ENCODE measurements at regions of chr7 and their contacts with region 1.

Region 1: GRCh38 chr7:876167-876967 is at the start of gene GET4:
- DNase-seq: peak; percentile 95 to 97
- ATAC-seq: peak; percentile 80 to 89 (median 84)
- H3K4me3 ChIP-seq: peak within 1 kb of the TSS; percentile 78 to 97 (median 84)
- H3K27ac ChIP-seq: peak within 1 kb of the TSS; percentile 55 to 94 (median 90)
- H3K4me1 ChIP-seq: peaks cover 10 to 74% (median 53%) of the 10 kb centered on the region in 9 donors
- H3K27me3 ChIP-seq: no peaks in the 10 kb centered on the region
- CTCF ChIP-seq: peak in 4 of 9 donors; percentile 23 to 61 (median 50)
- total RNA-seq, gene GET4: 14.7 to 25.0 (median 20.4) TPM

Region 2: DNA sequence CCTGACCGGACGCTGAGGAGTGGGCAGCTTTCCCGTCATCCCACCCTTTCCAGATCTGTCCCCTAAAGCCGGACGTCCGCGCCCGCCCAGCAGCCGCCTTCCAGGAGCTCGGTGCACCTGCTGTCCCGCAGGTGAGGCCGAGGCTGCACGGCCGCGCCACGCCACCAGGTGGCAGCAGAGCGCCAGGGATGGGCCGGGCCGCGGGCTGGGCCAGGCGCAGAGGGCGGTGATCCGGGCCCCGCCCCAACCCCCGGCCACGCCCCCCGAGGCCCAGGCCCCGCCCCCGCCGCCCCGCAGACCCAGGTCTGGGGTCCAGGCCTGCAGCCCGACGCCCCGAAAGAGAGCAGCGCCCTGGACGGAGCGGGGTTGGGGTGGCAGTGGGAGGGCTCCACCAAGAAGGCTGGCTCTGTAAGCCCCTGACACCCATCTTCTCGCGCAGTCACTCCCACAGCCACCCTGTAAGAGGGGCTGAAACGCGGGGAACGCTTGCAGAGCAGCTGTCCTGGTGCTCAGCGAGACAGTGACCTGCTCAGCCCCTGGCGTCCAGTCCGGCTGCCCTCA is 554.2 kb before region 1 on chr7:
- intact Hi-C with region 1: loop called in 4 of 10 experiments (anchors 5 to 10 kb)
- DNase-seq: peak; percentile 48 to 79
- ATAC-seq: peak; percentile 65 to 90 (median 80)
- H3K4me3 ChIP-seq: peak overlapping the region in 1 of 10 donors; percentile 20
- H3K27ac ChIP-seq: no peak overlapping the region
- H3K4me1 ChIP-seq: peaks cover 0 to 33% (median 5%) of the 10 kb centered on the region in 9 donors
- H3K27me3 ChIP-seq: peaks cover 0 to 25% (median 15%) of the 10 kb centered on the region in 7 donors
- CTCF ChIP-seq: peak; percentile 84 to 98 (median 95)

Region 3: DNA sequence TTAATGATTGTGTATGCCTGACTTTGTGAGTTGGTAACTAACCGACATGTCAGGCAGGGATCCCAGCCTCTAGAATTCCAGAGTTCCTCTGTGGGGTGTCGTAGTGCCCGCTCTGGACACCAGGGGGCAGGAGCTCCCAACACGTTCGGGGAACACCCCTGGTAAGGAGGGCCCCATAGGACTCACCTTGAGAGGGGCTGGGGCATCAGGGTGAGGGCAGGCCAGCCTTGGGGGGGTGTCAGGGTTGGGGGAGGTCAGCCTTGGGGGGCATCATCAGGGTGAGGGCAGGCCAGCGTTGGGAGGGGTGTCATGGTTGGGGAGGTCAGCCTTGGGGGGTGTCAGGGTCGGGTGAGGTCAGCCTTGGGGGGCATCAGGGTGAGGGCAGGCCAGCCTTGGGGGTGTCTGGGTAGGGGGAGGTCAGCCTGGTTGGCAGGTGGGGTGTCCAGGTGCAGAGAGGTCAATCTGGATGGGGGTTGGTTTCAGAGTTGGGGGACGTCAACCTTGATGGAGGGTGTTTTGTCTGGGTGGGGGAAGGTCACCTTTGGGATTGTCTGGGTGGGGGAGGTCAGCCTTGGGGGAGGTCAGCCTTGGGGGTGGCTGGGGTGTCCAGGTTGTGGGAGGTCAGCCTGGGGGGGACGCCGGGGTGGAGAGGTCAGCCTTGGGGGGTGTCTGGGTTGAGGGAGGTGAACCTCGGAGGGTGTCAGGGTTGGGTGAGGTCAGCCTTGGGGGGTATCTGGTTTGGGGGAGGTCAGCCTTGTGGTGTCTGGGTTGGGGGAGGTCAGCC is 89.7 kb before region 1 on chr7:
- intact Hi-C with region 1: loop called in 9 of 10 experiments (anchors 1 to 5 kb)
- DNase-seq: peak; percentile 77 to 83
- ATAC-seq: peak; percentile 52 to 90 (median 82)
- H3K4me3 ChIP-seq: no peak overlapping the region
- H3K27ac ChIP-seq: peak overlapping the region in 1 of 10 donors; percentile 8
- H3K4me1 ChIP-seq: peaks cover 0 to 7% (median 1%) of the 10 kb centered on the region in 9 donors
- H3K27me3 ChIP-seq: no peaks in the 10 kb centered on the region
- CTCF ChIP-seq: peak; percentile 68 to 83 (median 78)

Region 4: DNA sequence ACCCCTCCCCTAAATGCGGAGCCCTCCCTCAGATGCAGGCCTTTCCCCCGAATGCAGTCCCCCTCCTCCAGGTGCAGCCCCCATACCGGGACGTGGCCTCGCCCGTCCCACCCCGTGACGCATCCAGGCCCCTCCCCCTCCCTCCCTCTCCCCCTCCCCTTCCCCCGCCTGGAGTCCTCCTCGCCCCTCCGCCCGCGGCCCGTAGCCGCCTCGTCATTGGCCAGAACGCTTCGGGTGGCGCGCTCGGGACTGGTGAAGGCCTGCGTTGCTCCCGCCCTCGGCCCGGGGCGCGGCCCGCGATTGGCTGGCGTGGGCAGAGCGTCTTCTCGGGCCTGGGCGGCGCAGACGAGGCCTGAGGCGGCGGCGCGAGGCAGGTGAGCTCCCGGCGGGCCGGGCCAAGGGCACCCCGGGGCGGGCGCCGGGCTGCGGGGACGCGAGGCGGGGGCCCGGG is 60.0 kb before region 1 on chr7:
- intact Hi-C with region 1: loop called in 4 of 10 experiments (anchors 2 to 10 kb)
- DNase-seq: peak; percentile 98 to 99
- ATAC-seq: peak; percentile 89 to 95 (median 92)
- H3K4me3 ChIP-seq: peak overlapping the region in 9 of 10 donors; percentile 65 to 91 (median 82)
- H3K27ac ChIP-seq: peak overlapping the region in 9 of 10 donors; percentile 66 to 99 (median 92)
- H3K4me1 ChIP-seq: peaks cover 13 to 80% (median 60%) of the 10 kb centered on the region in 9 donors
- H3K27me3 ChIP-seq: peaks cover 0 to 11% (median 0%) of the 10 kb centered on the region in 7 donors
- CTCF ChIP-seq: no peak

Region 5: GRCh38 chr7:821688-822087 is 54.7 kb before region 1 on chr7:
- intact Hi-C with region 1: loop called in 3 of 10 experiments (anchors 5 to 10 kb)
- DNase-seq: peak in 1 of 2 donors; percentile 18
- ATAC-seq: peak; percentile 21 to 77 (median 68)
- H3K4me3 ChIP-seq: no peak overlapping the region
- H3K27ac ChIP-seq: peak overlapping the region in 8 of 10 donors; percentile 18 to 97 (median 58)
- H3K4me1 ChIP-seq: peaks cover 18 to 94% (median 81%) of the 10 kb centered on the region in 9 donors
- H3K27me3 ChIP-seq: peaks cover 0 to 8% (median 0%) of the 10 kb centered on the region in 7 donors
- CTCF ChIP-seq: peak in 7 of 9 donors; percentile 16 to 57 (median 28)

Region 6: DNA sequence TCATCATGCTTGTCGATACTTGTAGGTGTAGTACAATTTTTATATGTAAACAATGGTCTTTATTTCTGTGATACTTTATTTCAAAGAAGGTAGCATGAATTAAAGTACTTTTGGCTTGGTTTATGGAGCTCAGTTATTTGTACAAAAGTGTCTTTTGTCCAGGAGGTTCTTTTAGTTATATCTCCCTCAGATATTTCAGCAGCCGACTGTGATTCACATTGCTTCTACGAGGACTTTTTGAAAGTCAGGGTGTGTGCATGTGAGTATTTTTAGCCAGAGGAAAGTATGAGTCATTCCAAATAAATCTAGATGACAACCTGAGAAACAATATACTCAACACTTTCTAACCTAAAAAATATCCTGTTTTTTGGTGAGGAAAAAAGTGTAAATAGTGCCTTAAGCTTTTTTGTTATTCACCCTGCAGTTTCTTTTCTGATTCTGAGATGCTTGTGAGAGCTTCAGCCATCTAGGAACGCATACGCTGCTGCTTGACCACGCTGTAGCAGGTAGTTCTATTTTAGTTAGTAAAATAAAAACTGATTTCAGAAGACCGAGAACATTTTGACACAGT is 44.7 kb before region 1 on chr7:
- intact Hi-C with region 1: loop called in 6 of 10 experiments (anchors 5 to 10 kb)
- DNase-seq: no peak
- ATAC-seq: peak; percentile 46 to 89 (median 80)
- H3K4me3 ChIP-seq: peak overlapping the region in 9 of 10 donors; percentile 0 to 36 (median 31)
- H3K27ac ChIP-seq: peak overlapping the region; percentile 78 to 97 (median 92)
- H3K4me1 ChIP-seq: peaks cover 43 to 100% (median 76%) of the 10 kb centered on the region in 9 donors
- H3K27me3 ChIP-seq: no peaks in the 10 kb centered on the region
- CTCF ChIP-seq: no peak

Region 7: DNA sequence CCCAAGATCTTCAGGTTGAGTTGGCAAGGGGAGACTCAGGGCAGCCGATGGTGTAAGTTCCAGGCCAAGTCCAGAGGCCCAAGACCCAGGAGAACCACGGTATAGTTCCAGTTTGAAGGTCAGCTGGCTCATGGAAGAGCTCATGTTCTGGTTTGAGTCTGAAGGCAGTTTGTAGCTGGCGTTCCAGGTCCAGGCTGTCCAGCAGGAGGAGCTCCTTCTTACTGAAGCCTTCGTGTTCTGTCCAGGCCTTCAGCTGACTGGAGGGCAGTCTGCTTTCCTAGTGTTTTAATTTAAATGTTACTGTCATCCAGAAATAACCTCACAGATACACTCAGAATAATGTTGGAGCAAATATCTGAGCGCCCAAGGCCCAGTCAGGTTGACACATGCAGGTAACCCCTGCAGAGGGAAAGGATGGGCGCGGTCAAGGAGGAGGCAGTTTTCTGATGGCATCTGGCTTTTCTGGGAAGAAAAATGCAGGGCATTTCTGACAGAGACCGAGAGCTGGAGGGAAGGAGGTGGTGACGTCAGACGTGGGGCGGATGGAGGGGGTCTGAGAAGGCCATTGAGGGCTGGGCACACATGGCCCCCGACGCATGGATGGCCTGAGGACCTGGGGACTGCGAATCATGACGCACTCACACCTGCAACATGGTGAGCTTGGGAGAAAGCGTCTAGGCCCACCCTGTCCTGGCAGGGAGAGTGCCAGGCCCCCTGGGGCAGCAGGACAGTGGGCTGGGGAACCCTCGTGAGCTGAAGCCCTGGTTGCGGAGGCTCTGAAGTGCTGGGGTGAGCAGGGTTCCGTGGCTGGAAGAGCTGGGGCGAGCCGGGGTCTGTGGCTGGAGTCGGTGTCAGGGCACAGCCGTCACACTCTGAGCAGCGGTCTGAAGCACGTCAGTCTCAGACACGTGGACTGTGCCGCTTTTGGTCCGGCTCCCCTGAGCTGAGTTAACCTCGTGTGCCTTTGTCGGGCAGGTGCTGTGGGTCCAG is 39.7 kb before region 1 on chr7:
- intact Hi-C with region 1: loop called in 5 of 10 experiments (anchors 5 kb)
- DNase-seq: no peak
- ATAC-seq: peak; percentile 18 to 68 (median 48)
- H3K4me3 ChIP-seq: no peak overlapping the region
- H3K27ac ChIP-seq: peak overlapping the region; percentile 25 to 97 (median 74)
- H3K4me1 ChIP-seq: peaks cover 24 to 79% (median 56%) of the 10 kb centered on the region in 9 donors
- H3K27me3 ChIP-seq: no peaks in the 10 kb centered on the region
- CTCF ChIP-seq: peak; percentile 28 to 65 (median 55)

Region 8: GRCh38 chr7:923108-924041 is 47.0 kb after region 1 on chr7:
- intact Hi-C with region 1: no loop called
- DNase-seq: peak; percentile 56 to 60
- ATAC-seq: peak; percentile 5 to 80 (median 68)
- H3K4me3 ChIP-seq: peak overlapping the region in 3 of 10 donors; percentile 1 to 47 (median 28)
- H3K27ac ChIP-seq: peak overlapping the region in 6 of 10 donors; percentile 4 to 93 (median 14)
- H3K4me1 ChIP-seq: peaks cover 0 to 56% (median 9%) of the 10 kb centered on the region in 9 donors
- H3K27me3 ChIP-seq: peaks cover 0 to 13% (median 0%) of the 10 kb centered on the region in 7 donors
- CTCF ChIP-seq: no peak

Region 9: GRCh38 chr7:936131-937054 is 60.0 kb after region 1 on chr7:
- intact Hi-C with region 1: no loop called
- DNase-seq: peak in 1 of 2 donors; percentile 5
- ATAC-seq: no peak
- H3K4me3 ChIP-seq: no peak overlapping the region
- H3K27ac ChIP-seq: no peak overlapping the region
- H3K4me1 ChIP-seq: peaks cover 0 to 14% (median 0%) of the 10 kb centered on the region in 9 donors
- H3K27me3 ChIP-seq: no peaks in the 10 kb centered on the region
- CTCF ChIP-seq: no peak

Region 10: GRCh38 chr7:1004018-1004852 is 127.9 kb after region 1 on chr7:
- intact Hi-C with region 1: no loop called
- DNase-seq: no peak
- ATAC-seq: peak in 7 of 8 donors; percentile 7 to 46 (median 30)
- H3K4me3 ChIP-seq: no peak overlapping the region
- H3K27ac ChIP-seq: no peak overlapping the region
- H3K4me1 ChIP-seq: no peaks in the 10 kb centered on the region
- H3K27me3 ChIP-seq: no peaks in the 10 kb centered on the region
- CTCF ChIP-seq: no peak

Region 11: DNA sequence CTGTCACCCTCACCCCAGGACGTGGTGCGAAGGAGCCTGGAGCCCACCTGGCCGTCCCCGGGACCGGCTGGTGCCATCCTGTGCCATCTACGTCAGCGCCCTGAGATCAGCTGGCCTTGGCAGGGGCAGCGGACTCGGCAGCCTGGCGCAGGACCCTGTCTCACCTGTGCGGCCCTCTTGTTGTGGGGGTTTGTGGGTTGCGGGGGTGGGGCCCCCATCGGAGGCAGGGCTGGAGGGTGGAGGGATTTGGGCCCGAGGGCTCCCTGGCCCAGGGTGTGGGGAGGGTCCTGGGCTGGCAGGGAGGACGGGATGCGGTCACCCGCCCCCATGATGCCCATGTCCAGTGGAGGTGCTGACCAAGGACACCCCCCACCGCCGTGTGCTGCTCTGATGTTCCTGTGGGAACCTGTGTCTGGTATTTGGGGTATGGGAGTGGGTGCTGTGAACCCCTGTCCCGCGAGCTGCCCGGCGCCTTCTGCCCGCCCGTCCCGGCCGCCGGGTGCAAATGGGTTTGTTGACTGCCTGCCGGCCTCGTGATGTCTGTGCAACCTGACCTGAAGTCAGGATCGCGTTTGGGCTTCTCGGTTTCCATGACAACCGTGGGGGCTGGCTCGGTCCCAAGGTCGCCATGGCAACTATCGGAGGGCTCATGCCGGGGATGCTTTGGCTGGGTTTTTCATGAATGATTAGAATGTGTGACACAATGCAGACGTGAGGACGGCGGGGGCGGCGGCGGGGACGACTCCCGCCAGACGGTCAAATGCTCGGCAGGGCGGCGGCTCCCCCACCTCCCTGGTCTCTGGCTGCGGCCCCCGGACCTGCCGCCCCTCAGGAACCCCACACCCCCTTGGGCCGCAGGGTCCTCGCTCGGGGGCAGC is 661.4 kb after region 1 on chr7:
- intact Hi-C with region 1: no loop called
- DNase-seq: peak; percentile 94 to 97
- ATAC-seq: peak; percentile 29 to 65 (median 50)
- H3K4me3 ChIP-seq: peak overlapping the region; percentile 26 to 69 (median 55)
- H3K27ac ChIP-seq: peak overlapping the region; percentile 92 to 100 (median 99)
- H3K4me1 ChIP-seq: peaks cover 26 to 80% (median 57%) of the 10 kb centered on the region in 9 donors
- H3K27me3 ChIP-seq: no peaks in the 10 kb centered on the region
- CTCF ChIP-seq: no peak

Measured in heart right ventricle (tissue), 16 donors.